Activated CD4-positive, alpha-beta memory T cell treated with anti-CD3 and anti-CD28 coated beads for 36 hours (primary cell): ENCODE measurements at regions of chr6 and their contacts with region 1.

Region 1: GRCh38 chr6:146950351-146950835 is 253.8 kb upstream of the STXBP5 start:
- DNase-seq: peak; percentile 31
- H3K4me3 Mint-ChIP-seq: no peak overlapping the region
- H3K27ac Mint-ChIP-seq: peak overlapping the region; percentile 70
- H3K4me1 Mint-ChIP-seq: peaks cover 14% of the 10 kb centered on the region
- H3K27me3 Mint-ChIP-seq: no peaks in the 10 kb centered on the region

Region 2: DNA sequence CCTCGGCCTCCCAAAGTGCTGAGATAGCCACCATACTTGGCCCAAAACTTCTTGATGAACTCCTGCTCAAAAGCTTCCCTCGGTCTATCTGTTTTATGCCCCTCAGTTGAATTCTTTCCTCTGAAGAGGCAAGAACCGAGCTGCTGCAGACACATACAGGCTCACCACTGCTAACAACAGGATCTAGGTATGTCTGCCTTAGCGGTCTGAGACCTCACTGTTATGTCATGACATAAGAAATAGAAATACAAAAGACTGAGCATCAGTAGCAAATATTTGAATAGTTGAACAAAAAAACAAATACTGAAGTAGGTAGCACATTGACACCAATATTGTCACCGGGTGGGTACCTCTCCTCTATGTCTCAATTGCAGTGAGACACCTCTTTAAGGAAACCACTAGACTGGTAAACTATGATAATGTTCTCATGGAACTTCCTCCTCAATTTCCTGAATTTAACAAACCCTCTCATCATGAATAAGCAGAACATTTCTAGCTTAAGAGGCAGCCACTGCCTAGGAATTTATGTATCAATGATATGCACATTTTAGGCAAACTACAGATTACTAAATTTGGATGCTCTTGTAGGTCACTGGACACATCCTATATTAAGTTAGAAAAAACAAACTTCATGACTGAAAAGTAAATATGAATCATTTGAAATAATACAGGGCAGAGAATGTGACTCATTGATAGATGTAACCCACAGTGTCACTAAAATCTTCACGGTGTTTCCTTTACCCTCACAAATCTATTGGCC is 244.4 kb after region 1 on chr6:
- CTCF ChIA-PET with region 1: no interaction called
- POLR2A ChIA-PET with region 1: no interaction called
- intact Hi-C with region 1: loop called (anchors 1 kb)
- DNase-seq: no peak
- H3K4me3 Mint-ChIP-seq: peak overlapping the region; percentile 21
- H3K27ac Mint-ChIP-seq: peak overlapping the region; percentile 87
- H3K4me1 Mint-ChIP-seq: peaks cover 21% of the 10 kb centered on the region
- H3K27me3 Mint-ChIP-seq: no peaks in the 10 kb centered on the region

Region 3: DNA sequence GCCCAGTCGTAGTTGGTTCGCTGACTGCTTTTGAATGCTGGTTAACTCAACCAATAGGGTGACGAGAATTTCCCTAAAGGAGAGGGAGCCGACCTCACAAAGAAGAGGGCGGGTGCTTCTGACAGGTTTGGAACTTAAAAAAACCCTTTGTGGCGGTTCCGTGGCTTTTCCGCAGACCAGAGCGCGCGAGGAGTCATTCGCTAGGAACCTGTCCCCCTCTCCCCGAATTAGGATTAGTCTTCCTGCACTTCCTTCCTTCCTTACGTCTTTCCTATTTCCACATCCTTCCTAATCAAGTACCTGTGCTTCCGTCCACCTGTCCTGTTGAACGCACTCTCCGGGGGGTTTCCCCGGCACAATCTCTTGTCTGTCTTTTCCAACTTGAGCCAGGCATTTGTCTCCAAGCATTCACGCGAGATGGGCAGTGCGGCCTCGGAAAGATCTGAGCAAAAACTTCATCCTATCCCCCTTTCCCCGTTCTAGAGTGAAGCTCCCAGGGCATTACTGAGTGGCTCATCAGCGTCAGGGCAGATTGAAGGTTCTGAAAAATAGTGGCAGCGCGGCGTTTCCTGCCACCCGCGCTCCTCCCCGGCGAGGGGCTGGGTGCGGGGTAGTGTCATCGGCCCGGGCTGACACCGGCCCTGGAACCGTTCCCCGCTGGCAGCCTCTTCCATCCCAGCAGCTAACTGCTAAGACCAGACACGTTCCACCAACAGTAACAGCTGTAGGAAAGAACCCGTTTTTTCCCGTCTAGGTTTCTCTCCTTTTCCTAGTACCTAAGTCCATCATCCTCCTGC is 252.3 kb after region 1 on chr6:
- CTCF ChIA-PET with region 1: no interaction called
- POLR2A ChIA-PET with region 1: no interaction called
- intact Hi-C with region 1: loop called (anchors 1 kb)
- DNase-seq: peak; percentile 87
- H3K4me3 Mint-ChIP-seq: peak overlapping the region; percentile 81
- H3K27ac Mint-ChIP-seq: peak overlapping the region; percentile 96
- H3K4me1 Mint-ChIP-seq: peaks cover 21% of the 10 kb centered on the region
- H3K27me3 Mint-ChIP-seq: no peaks in the 10 kb centered on the region